ENCODE measurements at regions of chr17 and their contacts with region 1.

Region 1: GRCh38 chr17:27805520-27806146 is 5.3 kb upstream of the NOS2 start:
- DNase-seq: peak; percentile 71 to 86 (median 83)
- H3K4me3 ChIP-seq: peak overlapping the region; percentile 17
- H3K27ac ChIP-seq: no peak overlapping the region
- H3K4me1 ChIP-seq: peaks cover 3% of the 10 kb centered on the region
- H3K27me3 ChIP-seq: no peaks in the 10 kb centered on the region
- CTCF ChIP-seq: peak; percentile 72 to 84 (median 78)
- EP300 ChIP-seq: no peak
- POLR2A ChIP-seq: no peak

Region 2: GRCh38 chr17:27756512-27757371 is 48.9 kb before region 1 on chr17:
- intact Hi-C with region 1: loop called in 1 of 4 experiments (anchors 5 kb)
- DNase-seq: peak in 3 of 5 donors; percentile 41 to 59 (median 53)
- H3K4me3 ChIP-seq: no peak overlapping the region
- H3K27ac ChIP-seq: no peak overlapping the region
- H3K4me1 ChIP-seq: no peaks in the 10 kb centered on the region
- H3K27me3 ChIP-seq: no peaks in the 10 kb centered on the region
- CTCF ChIP-seq: peak in 2 of 3 donors; percentile 25 to 39
- EP300 ChIP-seq: no peak
- POLR2A ChIP-seq: no peak

Region 3: GRCh38 chr17:27879987-27880608 is 74.5 kb after region 1 on chr17:
- intact Hi-C with region 1: loop called in 3 of 4 experiments (anchors 1 to 5 kb)
- DNase-seq: peak; percentile 64 to 82 (median 76)
- H3K4me3 ChIP-seq: no peak overlapping the region
- H3K27ac ChIP-seq: no peak overlapping the region
- H3K4me1 ChIP-seq: peaks cover 4% of the 10 kb centered on the region
- H3K27me3 ChIP-seq: no peaks in the 10 kb centered on the region
- CTCF ChIP-seq: peak; percentile 46 to 65 (median 61)
- EP300 ChIP-seq: no peak
- POLR2A ChIP-seq: no peak

Region 4: GRCh38 chr17:28252436-28252835 is 446.8 kb after region 1 on chr17:
- intact Hi-C with region 1: loop called in 2 of 4 experiments (anchors 10 kb)
- DNase-seq: no peak
- H3K4me3 ChIP-seq: no peak overlapping the region
- H3K27ac ChIP-seq: no peak overlapping the region
- H3K4me1 ChIP-seq: peaks cover 1% of the 10 kb centered on the region
- H3K27me3 ChIP-seq: no peaks in the 10 kb centered on the region
- CTCF ChIP-seq: no peak
- EP300 ChIP-seq: no peak
- POLR2A ChIP-seq: no peak